ENCODE measurements at regions of chr4 and their contacts with region 1.

Region 1: DNA sequence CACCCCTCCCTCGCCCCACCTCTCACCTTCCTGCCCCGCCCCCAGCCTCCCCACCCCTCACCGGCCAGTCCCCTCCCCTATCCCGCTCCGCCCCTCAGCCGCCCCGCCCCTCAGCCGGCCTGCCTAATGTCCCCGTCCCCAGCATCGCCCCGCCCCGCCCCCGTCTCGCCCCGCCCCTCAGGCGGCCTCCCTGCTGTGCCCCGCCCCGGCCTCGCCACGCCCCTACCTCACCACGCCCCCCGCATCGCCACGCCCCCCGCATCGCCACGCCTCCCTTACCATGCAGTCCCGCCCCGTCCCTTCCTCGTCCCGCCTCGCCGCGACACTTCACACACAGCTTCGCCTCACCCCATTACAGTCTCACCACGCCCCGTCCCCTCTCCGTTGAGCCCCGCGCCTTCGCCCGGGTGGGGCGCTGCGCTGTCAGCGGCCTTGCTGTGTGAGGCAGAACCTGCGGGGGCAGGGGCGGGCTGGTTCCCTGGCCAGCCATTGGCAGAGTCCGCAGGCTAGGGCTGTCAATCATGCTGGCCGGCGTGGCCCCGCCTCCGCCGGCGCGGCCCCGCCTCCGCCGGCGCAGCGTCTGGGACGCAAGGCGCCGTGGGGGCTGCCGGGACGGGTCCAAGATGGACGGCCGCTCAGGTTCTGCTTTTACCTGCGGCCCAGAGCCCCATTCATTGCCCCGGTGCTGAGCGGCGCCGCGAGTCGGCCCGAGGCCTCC is at the starts of genes HTT and HTT-AS:
- DNase-seq: peak; percentile 95
- ATAC-seq: peak; percentile 87 to 92
- H3K4me3 ChIP-seq: peak within 1 kb of the TSS; percentile 74 to 90 (median 80)
- H3K27ac ChIP-seq: peak within 1 kb of the TSS; percentile 86 to 100 (median 96)
- H3K4me1 ChIP-seq: peaks cover 19 to 36% of the 10 kb centered on the region in 2 donors
- H3K27me3 ChIP-seq: no peaks in the 10 kb centered on the region
- CTCF ChIP-seq: no peak
- POLR2A ChIP-seq: peak; percentile 46 to 63
- total RNA-seq, gene HTT: 23.5 to 73.0 (median 51.1) TPM
- total RNA-seq, gene HTT-AS: not detected

Region 2: DNA sequence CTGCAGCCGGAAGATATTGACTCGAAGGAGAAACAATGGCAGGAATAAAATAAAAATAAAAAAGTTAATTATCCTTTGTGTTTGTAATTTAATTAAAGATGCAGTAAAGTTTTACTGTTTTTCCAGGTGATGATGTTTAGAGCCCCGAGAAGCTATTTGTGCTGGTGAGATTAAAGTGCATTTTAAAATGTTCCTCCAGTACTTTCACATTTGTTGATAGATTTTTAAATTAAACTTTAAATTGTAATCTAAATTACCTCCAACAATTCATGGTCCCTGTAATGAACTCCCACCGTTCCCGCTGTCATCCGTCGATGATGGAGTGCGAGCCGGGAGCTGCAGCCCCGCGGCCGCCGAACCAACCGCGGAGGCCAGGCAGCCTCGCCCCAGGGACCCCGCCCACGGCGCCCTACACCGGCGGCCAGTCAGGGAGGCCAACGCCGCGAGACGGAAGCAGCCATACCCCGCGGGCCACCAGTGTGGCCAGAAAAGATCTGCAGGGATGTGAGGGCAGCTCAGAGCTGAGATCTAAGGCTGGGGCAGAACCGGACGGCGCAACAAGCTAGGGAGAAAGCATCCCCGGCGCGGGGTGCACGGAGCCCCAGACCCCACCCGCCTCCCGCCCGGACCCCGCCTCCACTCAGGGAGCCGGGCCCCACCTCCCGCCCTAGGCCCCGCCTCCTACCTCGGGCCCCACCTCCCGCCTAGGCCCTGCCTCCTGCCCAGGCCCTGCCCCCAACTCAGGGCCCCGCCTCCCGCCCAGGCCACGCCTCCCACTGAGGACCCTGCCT is 1494.1 kb before region 1 on chr4:
- in situ Hi-C with region 1: no loop called
- intact Hi-C with region 1: loop called (anchors 10 kb)
- DNase-seq: peak; percentile 78 to 83
- ATAC-seq: peak; percentile 70 to 72
- H3K4me3 ChIP-seq: peak overlapping the region; percentile 50 to 62 (median 55)
- H3K27ac ChIP-seq: peak overlapping the region; percentile 57 to 74 (median 64)
- H3K4me1 ChIP-seq: peaks cover 0 to 5% of the 10 kb centered on the region in 2 donors
- H3K27me3 ChIP-seq: peaks cover 24 to 52% (median 35%) of the 10 kb centered on the region in 3 donors
- CTCF ChIP-seq: no peak
- POLR2A ChIP-seq: peak; percentile 17 to 22

Region 3: DNA sequence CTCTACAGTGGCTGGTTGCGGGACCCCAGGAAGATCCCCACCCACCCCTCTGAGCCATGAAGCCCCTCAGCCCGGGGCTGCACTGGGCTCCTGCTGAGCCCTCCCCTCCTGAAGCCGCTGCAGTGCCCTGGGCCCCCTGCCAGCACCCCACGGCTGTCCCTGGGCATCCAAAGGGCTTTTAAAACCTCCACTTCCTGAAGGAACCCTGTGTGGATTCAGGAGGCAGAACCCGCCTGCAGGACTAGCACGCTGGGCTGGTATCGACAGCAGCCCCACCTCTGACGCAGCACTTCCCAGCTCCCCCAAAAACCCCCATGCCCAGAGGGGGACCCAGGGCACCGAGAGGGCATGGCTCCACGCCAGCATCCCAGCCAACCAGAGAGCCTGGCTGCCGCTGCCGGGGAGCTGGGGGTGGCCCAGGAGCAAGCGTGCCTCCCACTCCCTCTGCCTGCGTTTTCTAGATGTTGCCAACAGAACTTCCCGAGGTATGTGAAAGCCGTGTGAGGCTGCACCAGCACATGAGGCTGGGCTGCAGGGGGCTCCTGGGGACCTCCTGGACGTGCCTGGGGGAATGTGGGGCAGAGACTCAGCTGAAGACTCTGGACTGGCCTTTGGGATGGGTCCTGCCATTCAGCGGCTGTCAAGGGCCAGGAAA is 818.6 kb before region 1 on chr4:
- in situ Hi-C with region 1: no loop called
- intact Hi-C with region 1: no loop called
- DNase-seq: peak; percentile 1 to 14
- ATAC-seq: no peak
- H3K4me3 ChIP-seq: peak overlapping the region; percentile 5 to 34 (median 24)
- H3K27ac ChIP-seq: peak overlapping the region; percentile 85 to 98 (median 94)
- H3K4me1 ChIP-seq: peaks cover 51 to 82% of the 10 kb centered on the region in 2 donors
- H3K27me3 ChIP-seq: no peaks in the 10 kb centered on the region
- CTCF ChIP-seq: no peak
- POLR2A ChIP-seq: no peak

Region 4: DNA sequence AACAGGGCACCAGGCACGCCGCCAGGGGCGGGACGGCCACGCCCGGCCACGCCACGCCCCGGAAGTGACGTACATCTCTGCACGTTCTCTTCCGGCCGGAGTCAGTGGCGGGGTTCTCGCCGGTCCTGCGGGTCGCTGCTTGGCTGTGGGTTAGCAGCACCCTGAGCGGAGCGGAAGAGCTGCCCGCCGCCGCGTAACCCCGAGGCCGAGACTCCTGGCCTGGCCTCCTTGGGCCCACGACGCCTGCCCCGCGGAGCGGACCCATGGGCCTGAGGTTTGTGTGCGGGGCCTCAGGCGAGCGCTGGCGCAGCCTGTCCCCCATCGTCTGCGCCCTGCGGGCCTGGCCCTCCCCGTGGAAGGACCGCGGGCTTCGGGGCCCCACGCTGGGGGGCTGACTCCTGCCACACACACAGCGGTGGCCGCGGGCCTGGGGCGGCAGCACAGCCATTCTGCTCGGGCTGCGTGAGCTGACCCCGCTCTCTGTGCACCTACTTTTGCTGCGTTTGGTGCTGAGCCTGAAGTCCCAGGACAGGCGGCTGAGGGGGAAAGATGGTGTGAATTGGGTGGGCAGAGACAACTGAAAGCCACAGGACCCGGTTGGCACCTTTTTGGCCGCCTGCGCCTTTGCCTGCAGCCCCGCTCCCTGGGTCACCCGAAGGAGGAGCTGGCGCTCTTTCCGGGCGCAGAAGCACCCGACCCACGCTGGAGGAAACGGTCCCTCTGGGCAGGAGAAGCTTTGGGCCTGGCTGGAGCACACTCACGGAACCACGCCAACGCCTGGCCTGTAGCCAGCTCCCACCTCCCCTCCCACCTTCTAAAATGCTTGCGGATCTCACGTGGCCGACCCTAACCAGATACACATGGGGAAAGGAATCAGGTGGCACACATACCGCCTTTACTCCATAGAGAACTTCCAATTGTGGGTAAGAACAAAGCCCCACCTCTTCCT is 139.2 kb before region 1 on chr4:
- in situ Hi-C with region 1: no loop called
- intact Hi-C with region 1: no loop called
- DNase-seq: peak; percentile 89 to 92
- ATAC-seq: peak; percentile 77 to 83
- H3K4me3 ChIP-seq: peak overlapping the region; percentile 75 to 98 (median 94)
- H3K27ac ChIP-seq: peak overlapping the region; percentile 86 to 98 (median 94)
- H3K4me1 ChIP-seq: peaks cover 29 to 30% of the 10 kb centered on the region in 2 donors
- H3K27me3 ChIP-seq: no peaks in the 10 kb centered on the region
- CTCF ChIP-seq: no peak
- POLR2A ChIP-seq: peak; percentile 90 to 95

Region 5: GRCh38 chr4:3047464-3048286 is 26.6 kb before region 1 on chr4:
- in situ Hi-C with region 1: no loop called
- intact Hi-C with region 1: loop called (anchors 2 kb)
- DNase-seq: peak; percentile 51 to 85
- ATAC-seq: peak; percentile 80 to 94
- H3K4me3 ChIP-seq: peak overlapping the region; percentile 29 to 57 (median 53)
- H3K27ac ChIP-seq: peak overlapping the region; percentile 51 to 84 (median 74)
- H3K4me1 ChIP-seq: peaks cover 0 to 9% of the 10 kb centered on the region in 2 donors
- H3K27me3 ChIP-seq: no peaks in the 10 kb centered on the region
- CTCF ChIP-seq: peak; percentile 57 to 80 (median 72)
- POLR2A ChIP-seq: no peak